Tibial artery (tissue), 4 donors: ENCODE measurements at regions of chr13 and their contacts with region 1.

Region 1: GRCh38 chr13:52011632-52012511 is at the start of gene ALG11:
- DNase-seq: peak; percentile 100
- H3K4me3 ChIP-seq: peak within 1 kb of the TSS; percentile 89 to 94
- H3K27ac ChIP-seq: peak within 1 kb of the TSS; percentile 75 to 83
- H3K4me1 ChIP-seq: peaks cover 0 to 23% (median 7%) of the 10 kb centered on the region in 4 donors
- H3K27me3 ChIP-seq: no peaks in the 10 kb centered on the region
- CTCF ChIP-seq: peak in 1 of 2 experiments; percentile 11

Region 2: GRCh38 chr13:51583875-51584730 is 427.8 kb before region 1 on chr13 and contains the start of gene WDFY2:
- intact Hi-C with region 1: loop called (anchors 10 kb)
- DNase-seq: peak; percentile 100
- H3K4me3 ChIP-seq: peak within 1 kb of the TSS; percentile 75 to 97
- H3K27ac ChIP-seq: peak within 1 kb of the TSS; percentile 77 to 88
- H3K4me1 ChIP-seq: peaks cover 0 to 35% (median 20%) of the 10 kb centered on the region in 4 donors
- H3K27me3 ChIP-seq: no peaks in the 10 kb centered on the region
- CTCF ChIP-seq: peak in 1 of 2 experiments; percentile 44

Region 3: GRCh38 chr13:52411629-52412028 is 399.8 kb after region 1 on chr13:
- intact Hi-C with region 1: no loop called
- DNase-seq: no peak
- H3K4me3 ChIP-seq: no peak overlapping the region
- H3K27ac ChIP-seq: no peak overlapping the region
- H3K4me1 ChIP-seq: peaks cover 0 to 3% (median under 1%) of the 10 kb centered on the region in 4 donors
- H3K27me3 ChIP-seq: no peaks in the 10 kb centered on the region
- CTCF ChIP-seq: no peak

Region 4: DNA sequence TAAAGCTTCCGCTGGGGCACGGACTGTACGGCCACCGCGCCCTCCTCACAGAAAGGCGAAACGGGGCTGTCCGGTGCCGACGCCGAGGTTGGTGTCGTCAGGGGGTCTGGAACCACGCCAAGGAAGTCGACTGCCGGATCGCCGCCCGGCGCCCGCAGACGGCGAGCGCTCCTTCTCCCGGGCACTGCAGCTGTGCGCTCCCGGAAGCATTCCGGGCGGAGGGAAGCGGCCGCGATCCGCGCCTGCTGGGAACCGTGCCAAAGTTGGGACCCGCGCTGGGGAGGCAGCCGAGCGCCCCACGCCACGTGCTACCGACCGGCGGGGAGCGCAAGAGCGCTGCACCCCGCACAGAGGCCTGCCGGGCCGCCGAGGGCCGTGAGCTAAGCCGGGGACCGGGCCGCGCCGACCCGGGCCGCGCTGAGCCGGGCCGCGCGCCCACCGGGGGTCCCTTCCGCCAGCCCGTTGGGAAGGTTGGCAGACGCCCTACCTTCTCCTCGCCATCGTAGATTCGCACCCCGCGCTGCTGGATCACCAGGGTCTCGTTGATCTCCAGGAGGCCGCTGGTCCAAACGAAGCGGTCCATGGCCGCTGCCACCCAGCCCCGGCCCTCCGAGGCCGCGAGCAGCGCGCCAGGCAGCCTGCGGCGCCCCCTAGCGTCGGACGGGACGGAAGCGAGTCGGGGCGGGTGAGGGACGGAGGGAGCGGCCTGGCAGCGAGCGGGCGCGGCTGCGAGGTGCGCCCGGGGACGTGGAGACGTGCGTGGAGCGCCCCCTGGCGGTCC is 438.3 kb after region 1 on chr13 and contains the start of gene VPS36:
- intact Hi-C with region 1: loop called (anchors 5 kb)
- DNase-seq: peak; percentile 92 to 97
- H3K4me3 ChIP-seq: peak within 1 kb of the TSS; percentile 69 to 70
- H3K27ac ChIP-seq: peak within 1 kb of the TSS; percentile 82 to 88
- H3K4me1 ChIP-seq: peaks cover 0 to 34% (median 19%) of the 10 kb centered on the region in 4 donors
- H3K27me3 ChIP-seq: no peaks in the 10 kb centered on the region
- CTCF ChIP-seq: peak; percentile 99 to 100